Right lobe of liver (tissue), 6 donors: ENCODE measurements at regions of chr22 and their contacts with region 1.

Region 1: GRCh38 chr22:19629720-19630419 is 84.4 kb upstream of the SEPTIN5 start:
- DNase-seq: peak; percentile 71 to 80 (median 73)
- ATAC-seq: peak; percentile 94 to 97 (median 97)
- H3K4me3 ChIP-seq: no peak overlapping the region
- H3K27ac ChIP-seq: no peak overlapping the region
- H3K4me1 ChIP-seq: no peaks in the 10 kb centered on the region
- H3K27me3 ChIP-seq: no peaks in the 10 kb centered on the region
- CTCF ChIP-seq: peak; percentile 88 to 98 (median 92)
- POLR2A ChIP-seq: no peak

Region 2: GRCh38 chr22:19495562-19496323 is 134.1 kb before region 1 on chr22:
- intact Hi-C with region 1: loop called (anchors 5 kb)
- DNase-seq: no peak
- ATAC-seq: peak; percentile 70 to 91 (median 74)
- H3K4me3 ChIP-seq: no peak overlapping the region
- H3K27ac ChIP-seq: no peak overlapping the region
- H3K4me1 ChIP-seq: no peaks in the 10 kb centered on the region
- H3K27me3 ChIP-seq: no peaks in the 10 kb centered on the region
- CTCF ChIP-seq: peak; percentile 43 to 48 (median 46)
- POLR2A ChIP-seq: no peak

Region 3: DNA sequence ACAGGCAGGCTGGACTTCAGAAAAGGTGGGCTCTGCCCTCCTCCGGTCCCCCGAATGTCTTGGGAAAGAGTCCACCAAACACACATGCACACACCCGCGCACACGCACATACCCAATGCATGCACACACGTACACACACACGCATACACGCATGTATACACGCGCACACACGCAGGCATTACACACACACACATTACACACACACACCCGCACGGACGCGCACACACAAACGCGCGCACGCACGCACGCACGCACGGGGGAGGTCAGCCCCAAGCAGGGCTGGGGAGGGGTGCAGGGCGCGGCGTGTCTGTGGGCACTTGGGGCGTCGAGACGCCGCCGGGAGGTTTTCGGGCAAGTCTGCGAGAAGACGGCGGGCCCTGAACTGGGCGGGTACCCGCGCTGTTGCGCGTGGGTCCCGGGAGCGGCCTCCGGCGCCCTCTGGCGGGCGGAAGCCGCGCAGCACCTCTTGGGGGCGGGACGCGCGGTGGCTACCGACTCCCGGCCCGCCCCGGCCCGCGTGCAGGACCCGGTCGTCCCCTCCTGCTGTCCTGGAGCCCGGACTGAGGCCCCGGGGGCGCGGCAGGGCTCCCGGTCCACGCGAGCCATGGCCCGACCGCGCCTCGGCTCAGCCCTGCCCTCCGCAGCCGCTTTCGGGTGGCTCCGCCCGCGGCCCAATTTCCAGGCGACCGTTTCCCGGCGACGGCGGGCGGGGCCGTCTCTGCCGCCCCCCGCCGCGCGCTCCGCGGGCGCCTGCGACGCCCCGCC is 88.0 kb after region 1 on chr22:
- intact Hi-C with region 1: no loop called
- DNase-seq: peak; percentile 77 to 81 (median 78)
- ATAC-seq: peak; percentile 83 to 95 (median 88)
- H3K4me3 ChIP-seq: peak overlapping the region; percentile 40 to 61 (median 46)
- H3K27ac ChIP-seq: no peak overlapping the region
- H3K4me1 ChIP-seq: peaks cover 0 to 15% (median 0%) of the 10 kb centered on the region in 4 donors
- H3K27me3 ChIP-seq: peaks cover 0 to 13% of the 10 kb centered on the region in 2 donors
- CTCF ChIP-seq: peak; percentile 90 to 99 (median 98)
- POLR2A ChIP-seq: no peak